ENCODE measurements at regions of chr6 and their contacts with region 1.

Region 1: GRCh38 chr6:14066782-14067406 is 50.7 kb upstream of the CD83 start:
- DNase-seq: peak; percentile 27
- ATAC-seq: peak; percentile 88
- H3K4me3 Mint-ChIP-seq: no peak overlapping the region
- H3K27ac Mint-ChIP-seq: no peak overlapping the region
- H3K4me1 Mint-ChIP-seq: peaks cover 4% of the 10 kb centered on the region
- H3K27me3 Mint-ChIP-seq: peaks cover 10% of the 10 kb centered on the region

Region 2: GRCh38 chr6:12890171-12890790 is 1176.6 kb before region 1 on chr6:
- CTCF ChIA-PET with region 1: no interaction called
- POLR2A ChIA-PET with region 1: no interaction called
- intact Hi-C with region 1: loop called in 1 of 2 experiments (anchors 5 kb)
- DNase-seq: peak; percentile 50
- ATAC-seq: no peak
- H3K4me3 Mint-ChIP-seq: no peak overlapping the region
- H3K27ac Mint-ChIP-seq: no peak overlapping the region
- H3K4me1 Mint-ChIP-seq: no peaks in the 10 kb centered on the region
- H3K27me3 Mint-ChIP-seq: peaks cover 3% of the 10 kb centered on the region

Region 3: DNA sequence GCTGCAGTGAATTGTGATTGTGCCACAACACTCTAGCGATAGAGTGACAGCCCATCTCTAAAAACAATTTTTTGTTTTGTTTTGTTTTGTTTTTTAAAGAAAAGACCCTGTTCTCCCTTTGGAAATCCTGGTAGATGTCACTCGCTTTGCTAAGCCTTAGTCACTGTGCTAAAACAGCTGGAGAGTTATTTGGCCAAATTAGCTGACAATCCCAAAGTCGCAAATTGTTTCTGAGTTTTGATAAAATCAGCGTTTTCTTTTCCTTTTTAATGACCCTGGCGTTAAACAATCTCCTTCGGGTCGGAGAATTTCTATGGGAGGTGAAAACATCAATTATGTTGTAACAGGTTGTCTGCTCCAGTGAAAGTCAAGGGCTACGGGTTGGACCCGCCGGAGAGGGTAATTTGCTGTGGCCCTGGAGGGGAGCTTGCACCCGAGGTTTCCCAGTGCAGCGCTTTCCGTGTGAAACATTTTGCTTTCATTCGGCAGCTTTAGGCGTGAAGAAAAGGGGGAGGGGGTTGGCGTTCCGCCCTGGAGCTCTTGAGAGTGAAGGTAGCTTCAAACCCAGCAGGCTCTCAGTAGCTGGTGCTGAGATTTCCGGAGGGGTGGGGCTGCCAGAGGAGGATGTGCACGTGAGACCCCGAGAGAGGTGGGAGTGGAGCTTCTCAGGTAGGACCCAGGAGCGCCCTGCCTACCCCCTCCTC is 1053.8 kb before region 1 on chr6:
- CTCF ChIA-PET with region 1: no interaction called
- POLR2A ChIA-PET with region 1: no interaction called
- intact Hi-C with region 1: no loop called
- DNase-seq: peak; percentile 29
- ATAC-seq: peak; percentile 26
- H3K4me3 Mint-ChIP-seq: peak overlapping the region; percentile 64
- H3K27ac Mint-ChIP-seq: no peak overlapping the region
- H3K4me1 Mint-ChIP-seq: peaks cover 7% of the 10 kb centered on the region
- H3K27me3 Mint-ChIP-seq: peaks cover 48% of the 10 kb centered on the region

Region 4: GRCh38 chr6:13795041-13795750 is 271.7 kb before region 1 on chr6:
- CTCF ChIA-PET with region 1: interaction called, 15 read pairs
- POLR2A ChIA-PET with region 1: no interaction called
- intact Hi-C with region 1: loop called (anchors 2 to 5 kb)
- DNase-seq: peak; percentile 94
- ATAC-seq: peak; percentile 97
- H3K4me3 Mint-ChIP-seq: no peak overlapping the region
- H3K27ac Mint-ChIP-seq: peak overlapping the region; percentile 66
- H3K4me1 Mint-ChIP-seq: peaks cover 23% of the 10 kb centered on the region
- H3K27me3 Mint-ChIP-seq: no peaks in the 10 kb centered on the region

Region 5: DNA sequence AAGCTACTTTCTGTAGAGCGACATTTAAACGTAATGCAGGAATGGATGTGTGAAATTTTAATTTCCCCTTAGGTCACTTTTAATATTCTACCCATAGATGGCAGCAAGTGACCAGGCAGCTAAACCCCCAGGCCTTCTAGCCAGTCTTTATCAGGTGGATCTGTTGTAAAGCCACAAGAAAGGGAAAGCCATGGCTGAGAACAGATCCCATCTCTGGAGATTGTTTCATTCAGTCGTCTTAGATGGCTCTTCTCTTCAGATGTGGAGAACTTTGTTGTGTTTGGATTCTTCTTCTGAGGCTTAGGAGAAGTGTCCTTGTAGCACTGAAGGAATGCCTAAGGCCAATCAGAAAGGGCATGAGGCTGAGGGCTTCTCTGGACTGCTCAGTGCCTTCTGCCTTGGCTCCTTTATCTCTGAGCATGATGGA is 157.9 kb before region 1 on chr6:
- CTCF ChIA-PET with region 1: interaction called, 18 read pairs
- POLR2A ChIA-PET with region 1: no interaction called
- intact Hi-C with region 1: loop called (anchors 1 kb)
- DNase-seq: peak; percentile 63
- ATAC-seq: peak; percentile 74
- H3K4me3 Mint-ChIP-seq: no peak overlapping the region
- H3K27ac Mint-ChIP-seq: no peak overlapping the region
- H3K4me1 Mint-ChIP-seq: peaks cover 2% of the 10 kb centered on the region
- H3K27me3 Mint-ChIP-seq: peaks cover 28% of the 10 kb centered on the region

Region 6: GRCh38 chr6:13924146-13924948 is 142.5 kb before region 1 on chr6:
- CTCF ChIA-PET with region 1: interaction called, 7 read pairs
- POLR2A ChIA-PET with region 1: no interaction called
- intact Hi-C with region 1: loop called in 1 of 2 experiments (anchors 5 kb)
- DNase-seq: peak; percentile 31
- ATAC-seq: peak; percentile 88
- H3K4me3 Mint-ChIP-seq: peak overlapping the region; percentile 71
- H3K27ac Mint-ChIP-seq: no peak overlapping the region
- H3K4me1 Mint-ChIP-seq: peaks cover 14% of the 10 kb centered on the region
- H3K27me3 Mint-ChIP-seq: peaks cover 51% of the 10 kb centered on the region

Region 7: DNA sequence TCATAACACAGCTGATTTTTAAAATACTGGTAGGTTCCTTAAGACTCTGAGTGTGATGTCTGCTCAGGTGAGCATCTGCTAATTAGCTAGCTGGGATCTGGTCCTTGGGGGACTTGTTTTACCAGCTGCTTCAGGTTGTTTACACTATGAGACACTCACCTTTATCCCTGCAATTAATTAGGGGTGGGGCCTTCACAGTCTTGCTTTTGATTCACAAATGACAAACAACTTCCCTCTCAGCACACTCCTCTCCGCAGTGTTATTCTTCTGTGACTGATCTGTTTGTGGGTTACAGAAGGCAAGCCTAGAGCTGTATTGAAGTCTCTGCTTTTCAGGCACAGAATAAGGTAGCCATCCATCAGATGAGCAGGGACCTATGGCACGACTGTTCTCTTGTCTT is 11.4 kb before region 1 on chr6:
- CTCF ChIA-PET with region 1: interaction called, 59 read pairs
- POLR2A ChIA-PET with region 1: no interaction called
- intact Hi-C with region 1: no loop called
- DNase-seq: no peak
- ATAC-seq: no peak
- H3K4me3 Mint-ChIP-seq: no peak overlapping the region
- H3K27ac Mint-ChIP-seq: no peak overlapping the region
- H3K4me1 Mint-ChIP-seq: no peaks in the 10 kb centered on the region
- H3K27me3 Mint-ChIP-seq: peaks cover 15% of the 10 kb centered on the region

Region 8: DNA sequence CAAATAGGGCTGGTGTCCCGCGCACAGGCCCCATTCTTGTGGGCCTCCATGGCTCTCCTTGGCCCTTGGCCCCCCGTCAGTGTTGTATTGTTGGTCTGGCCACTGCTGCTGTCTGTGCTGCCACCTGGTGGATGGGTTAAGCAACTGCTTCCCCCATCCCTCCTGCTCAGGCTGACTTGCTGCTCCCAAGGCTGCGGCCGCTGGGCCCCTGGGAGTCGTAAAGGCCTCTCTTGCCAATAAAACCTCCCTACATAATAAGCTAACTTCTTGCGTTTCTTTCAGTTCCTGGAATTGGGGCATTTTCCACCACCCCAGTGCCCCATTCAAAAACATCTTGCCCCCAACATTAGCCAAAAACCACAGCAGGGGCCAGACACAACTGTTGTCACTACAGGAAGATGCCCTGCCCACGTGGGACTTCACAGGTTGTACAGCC is 77.8 kb after region 1 on chr6:
- CTCF ChIA-PET with region 1: interaction called, 9 read pairs
- POLR2A ChIA-PET with region 1: no interaction called
- intact Hi-C with region 1: loop called in 1 of 2 experiments (anchors 5 kb)
- DNase-seq: peak; percentile 87
- ATAC-seq: peak; percentile 95
- H3K4me3 Mint-ChIP-seq: no peak overlapping the region
- H3K27ac Mint-ChIP-seq: no peak overlapping the region
- H3K4me1 Mint-ChIP-seq: peaks cover 5% of the 10 kb centered on the region
- H3K27me3 Mint-ChIP-seq: no peaks in the 10 kb centered on the region